ENCODE measurements at regions of chrX and their contacts with region 1.

Region 1: GRCh38 chrX:24693453-24694202 is at the start of gene POLA1:
- DNase-seq: peak; percentile 94
- H3K4me3 Mint-ChIP-seq: peak within 1 kb of the TSS; percentile 91
- H3K27ac Mint-ChIP-seq: peak within 1 kb of the TSS; percentile 91
- H3K4me1 Mint-ChIP-seq: peaks cover 15% of the 10 kb centered on the region
- H3K27me3 Mint-ChIP-seq: peaks cover 2% of the 10 kb centered on the region
- total RNA-seq, gene POLA1: 41.3 and 42.6 TPM in 2 replicates

Region 2: GRCh38 chrX:24464836-24465531 is 228.6 kb before region 1 on chrX and contains the start of gene PDK3:
- intact Hi-C with region 1: loop called (anchors 1 kb)
- DNase-seq: peak; percentile 95
- H3K4me3 Mint-ChIP-seq: peak within 1 kb of the TSS; percentile 84
- H3K27ac Mint-ChIP-seq: peak within 1 kb of the TSS; percentile 91
- H3K4me1 Mint-ChIP-seq: peaks cover 26% of the 10 kb centered on the region
- H3K27me3 Mint-ChIP-seq: no peaks in the 10 kb centered on the region
- total RNA-seq, gene PDK3: 26.3 and 30.7 TPM in 2 replicates

Region 3: DNA sequence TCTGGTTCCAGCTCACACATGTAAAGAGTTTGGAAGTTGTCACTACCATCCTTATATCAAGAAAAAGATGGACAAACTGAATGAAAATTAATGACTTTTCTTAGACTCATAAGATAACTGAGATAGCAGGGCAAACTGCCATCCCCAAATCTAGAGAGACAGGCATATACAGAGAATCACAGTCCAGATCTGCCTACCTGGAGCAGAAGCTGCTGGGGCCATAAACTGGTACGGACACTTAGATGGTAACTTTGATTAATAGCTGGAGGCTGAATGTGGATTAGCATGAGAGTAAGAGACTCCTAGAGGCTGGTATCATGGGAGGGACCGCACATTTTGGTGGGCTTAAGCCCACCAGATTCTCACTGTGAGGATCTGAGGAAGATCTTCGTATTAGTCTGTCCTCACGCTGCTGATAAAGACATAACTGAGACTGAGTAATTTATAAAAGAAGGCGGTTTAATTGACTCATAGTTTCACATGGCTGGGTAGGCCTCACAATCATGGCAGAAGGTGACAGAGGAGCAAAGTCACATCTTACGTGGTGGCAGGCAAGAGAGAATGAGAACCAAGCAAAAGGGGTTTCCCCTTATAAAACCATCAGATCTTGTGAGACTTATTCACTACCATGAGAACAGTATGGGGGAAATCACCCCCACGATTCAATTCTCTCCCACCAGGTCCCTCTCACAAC is 10.7 kb before region 1 on chrX:
- intact Hi-C with region 1: loop called (anchors 1 kb)
- DNase-seq: no peak
- H3K4me3 Mint-ChIP-seq: peak overlapping the region; percentile 15
- H3K27ac Mint-ChIP-seq: peak overlapping the region; percentile 66
- H3K4me1 Mint-ChIP-seq: peaks cover 10% of the 10 kb centered on the region
- H3K27me3 Mint-ChIP-seq: peaks cover 10% of the 10 kb centered on the region

Region 4: GRCh38 chrX:24956828-24957227 is 263.2 kb after region 1 on chrX:
- intact Hi-C with region 1: no loop called
- DNase-seq: no peak
- H3K4me3 Mint-ChIP-seq: no peak overlapping the region
- H3K27ac Mint-ChIP-seq: no peak overlapping the region
- H3K4me1 Mint-ChIP-seq: peaks cover 4% of the 10 kb centered on the region
- H3K27me3 Mint-ChIP-seq: no peaks in the 10 kb centered on the region

Measured in activated CD4-positive, alpha-beta T cell treated with anti-CD3 and anti-CD28 coated beads, Interleukin-2, amount 10 ng/mL, durations not matched to agents 24 days and 14 days (primary cell).